IMR-90 (cell line): ENCODE measurements at regions of chr13 and their contacts with region 1.

Region 1: DNA sequence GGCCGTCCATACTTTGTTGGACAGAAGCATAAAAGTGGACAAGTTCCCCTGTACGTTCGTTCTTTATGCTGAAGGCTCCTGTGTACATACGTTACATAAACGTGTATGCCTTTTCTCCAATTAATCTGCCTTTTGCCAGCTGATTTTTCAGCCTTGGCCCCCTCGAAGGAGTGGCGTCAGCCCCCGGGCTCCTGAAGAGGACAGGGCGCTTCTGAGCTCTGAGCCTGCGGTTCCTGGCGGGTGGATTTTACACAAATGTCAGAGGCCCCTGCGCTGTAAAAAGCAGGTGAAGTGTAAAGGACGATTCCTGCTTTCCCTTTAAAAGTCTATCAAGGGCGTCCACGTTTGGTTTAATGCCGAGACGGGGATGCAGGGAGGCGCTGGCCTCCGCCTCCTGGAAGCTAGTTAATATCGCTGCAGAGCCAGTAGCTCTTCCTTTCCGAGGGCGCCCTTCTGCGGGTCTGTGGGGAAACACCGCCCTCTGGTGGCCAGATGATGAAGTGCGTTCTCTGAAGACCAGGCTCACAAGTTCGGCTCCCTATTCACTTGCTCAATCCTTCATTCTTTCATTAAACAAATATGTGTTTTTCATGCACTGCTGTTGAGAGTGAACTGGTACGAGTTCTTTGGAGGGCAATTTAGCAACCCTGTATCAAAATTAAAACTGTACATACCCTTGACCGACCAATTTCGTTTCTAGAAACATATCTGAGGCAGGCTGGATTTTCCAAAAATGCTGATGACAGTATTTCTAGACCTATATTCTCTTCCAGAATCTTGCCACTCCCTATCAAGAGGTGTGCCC is 62.0 kb downstream of the GPR12 start:
- DNase-seq: peak; percentile 81
- ATAC-seq: peak; percentile 97
- H3K4me3 ChIP-seq: no peak overlapping the region
- H3K27ac ChIP-seq: no peak overlapping the region
- H3K4me1 ChIP-seq: no peaks in the 10 kb centered on the region
- H3K27me3 ChIP-seq: no peaks in the 10 kb centered on the region
- CTCF ChIP-seq: peak; percentile 98
- POLR2A ChIP-seq: peak; percentile 61
- RAD21 ChIP-seq: peak; percentile 100

Region 2: DNA sequence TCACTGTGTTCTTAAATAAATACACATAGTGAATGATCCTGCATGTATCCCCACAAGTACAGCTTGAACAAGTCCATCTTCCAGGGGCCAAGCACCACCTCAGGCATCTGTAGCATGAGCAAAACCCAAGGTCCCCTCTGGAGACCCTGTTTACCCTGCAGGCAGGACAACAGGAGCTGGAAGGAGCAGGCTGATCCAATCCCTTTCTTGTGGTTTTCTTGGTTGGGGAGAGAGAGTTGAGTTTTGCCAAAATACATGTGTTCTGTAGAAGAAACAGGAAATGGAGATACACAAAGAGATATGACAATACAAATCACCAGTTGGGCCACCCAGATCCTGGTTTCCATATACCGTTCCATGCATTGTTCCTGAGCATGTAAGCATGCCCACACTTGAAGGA is 739.6 kb before region 1 on chr13:
- CTCF ChIA-PET with region 1: no interaction called
- POLR2A ChIA-PET with region 1: no interaction called
- dilution Hi-C with region 1: no loop called
- in situ Hi-C with region 1: no loop called
- intact Hi-C with region 1: no loop called
- DNase-seq: no peak
- ATAC-seq: no peak
- H3K4me3 ChIP-seq: no peak overlapping the region
- H3K27ac ChIP-seq: no peak overlapping the region
- H3K4me1 ChIP-seq: no peaks in the 10 kb centered on the region
- H3K27me3 ChIP-seq: no peaks in the 10 kb centered on the region
- CTCF ChIP-seq: no peak
- POLR2A ChIP-seq: no peak
- RAD21 ChIP-seq: no peak

Region 3: DNA sequence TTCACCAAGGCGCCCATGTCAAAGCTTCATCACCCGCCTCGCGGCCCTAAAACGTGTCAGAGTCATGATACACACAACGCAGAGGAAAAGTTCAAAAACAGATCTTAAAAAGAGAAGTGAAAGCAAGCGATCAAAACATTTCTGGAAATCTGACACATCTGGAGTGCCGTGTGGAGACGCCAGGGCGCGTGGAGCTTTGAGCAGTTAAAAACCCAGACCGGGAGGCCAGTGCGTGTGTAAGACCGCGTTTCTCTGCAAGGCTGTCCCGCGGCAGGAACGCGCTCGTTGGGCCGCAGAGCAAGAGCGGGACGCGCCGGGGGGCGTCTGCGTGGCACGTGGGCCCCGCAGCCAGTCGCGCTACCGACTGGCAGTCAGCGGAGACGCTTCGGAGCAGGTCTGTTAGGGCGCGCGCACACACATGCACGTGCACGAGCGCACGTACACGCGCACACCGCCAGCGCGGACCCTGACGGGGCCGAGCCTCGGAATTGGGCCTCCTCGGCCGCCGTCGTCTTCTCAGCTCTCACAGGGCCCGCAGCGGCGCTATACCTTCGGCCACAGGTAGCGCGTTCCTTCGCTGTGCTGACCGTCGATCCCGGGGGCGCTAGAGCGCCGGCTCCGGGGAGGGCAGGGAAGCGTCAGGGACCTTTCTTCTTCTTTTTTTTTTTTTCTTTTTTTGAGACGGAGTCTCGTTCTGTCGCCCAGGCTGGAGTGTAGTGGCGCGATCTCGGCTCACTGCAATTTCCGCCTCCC is 512.3 kb before region 1 on chr13:
- CTCF ChIA-PET with region 1: interaction called, 27 read pairs
- POLR2A ChIA-PET with region 1: no interaction called
- dilution Hi-C with region 1: no loop called
- in situ Hi-C with region 1: loop called (anchors 5 kb)
- intact Hi-C with region 1: loop called (anchors 1 kb)
- DNase-seq: peak; percentile 89
- ATAC-seq: peak; percentile 87
- H3K4me3 ChIP-seq: peak overlapping the region; percentile 63
- H3K27ac ChIP-seq: peak overlapping the region; percentile 71
- H3K4me1 ChIP-seq: peaks cover 3% of the 10 kb centered on the region; the same call in 1 of the 2 replicates
- H3K27me3 ChIP-seq: no peaks in the 10 kb centered on the region
- CTCF ChIP-seq: peak; percentile 42
- POLR2A ChIP-seq: no peak
- RAD21 ChIP-seq: peak; percentile 29

Region 4: GRCh38 chr13:26253787-26254582 is 444.6 kb before region 1 on chr13 and contains the start of gene CDK8:
- CTCF ChIA-PET with region 1: no interaction called
- POLR2A ChIA-PET with region 1: no interaction called
- dilution Hi-C with region 1: no loop called
- in situ Hi-C with region 1: no loop called
- intact Hi-C with region 1: loop called (anchors 1 kb)
- DNase-seq: peak; percentile 87
- ATAC-seq: peak; percentile 95
- H3K4me3 ChIP-seq: peak within 1 kb of the TSS; percentile 82
- H3K27ac ChIP-seq: peak within 1 kb of the TSS; percentile 98
- H3K4me1 ChIP-seq: no peaks in the 10 kb centered on the region
- H3K27me3 ChIP-seq: no peaks in the 10 kb centered on the region
- CTCF ChIP-seq: no peak
- POLR2A ChIP-seq: 0 out of 2 replicates have a peak, but pooled peaks have one; percentile 37
- RAD21 ChIP-seq: no peak
- total RNA-seq, gene CDK8: 19.0 and 21.9 TPM in 2 replicates

Region 5: DNA sequence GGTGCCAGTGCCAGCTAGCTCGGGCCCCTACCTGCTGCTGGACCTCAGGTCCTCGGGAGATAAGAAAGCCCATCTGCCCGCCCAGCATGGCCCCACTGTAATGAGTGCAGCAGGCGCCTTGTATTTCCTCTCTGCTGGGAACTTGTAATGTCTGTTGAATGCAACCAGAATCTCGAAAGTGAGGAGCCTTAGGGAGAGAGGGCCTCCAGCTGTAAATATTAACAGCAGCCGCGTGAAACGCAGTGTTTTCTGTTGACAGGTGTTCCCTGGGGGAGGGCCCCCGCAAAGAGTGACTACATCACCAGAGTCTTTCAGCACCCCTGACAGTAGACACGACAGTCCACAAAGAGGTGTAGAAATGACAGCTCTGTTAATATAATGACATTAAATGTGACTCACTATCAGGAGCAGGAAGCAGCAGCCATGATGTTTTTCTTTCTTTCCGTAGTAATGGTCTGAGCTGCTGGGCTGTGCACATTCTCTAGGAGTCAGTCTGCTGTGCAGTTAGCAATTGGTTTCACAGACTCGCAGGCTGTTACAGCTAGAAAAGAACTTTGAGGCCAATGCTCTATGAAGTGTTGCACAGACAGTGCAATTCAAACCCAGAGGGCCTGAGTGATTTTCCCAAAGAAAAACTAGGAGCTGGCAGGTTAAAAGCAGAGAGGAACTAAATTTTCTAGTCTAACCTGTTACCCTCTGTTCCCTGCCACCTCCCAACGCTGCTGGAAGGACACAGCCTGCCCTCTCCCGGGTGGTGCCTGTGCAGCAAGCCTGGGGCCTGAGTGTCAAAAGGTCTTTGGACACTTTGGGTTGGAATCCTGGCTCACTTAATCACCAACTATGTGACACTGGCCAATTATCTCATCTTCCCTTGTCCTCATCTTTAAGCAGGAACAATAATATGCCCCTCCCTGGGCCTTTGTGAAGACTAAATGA is 199.7 kb before region 1 on chr13:
- CTCF ChIA-PET with region 1: interaction called, 7 read pairs
- POLR2A ChIA-PET with region 1: interaction called, 5 read pairs
- dilution Hi-C with region 1: no loop called
- in situ Hi-C with region 1: no loop called
- intact Hi-C with region 1: loop called (anchors 1 kb)
- DNase-seq: peak; percentile 43
- ATAC-seq: peak; percentile 19; the same call in 1 of the 2 replicates
- H3K4me3 ChIP-seq: no peak overlapping the region
- H3K27ac ChIP-seq: peak overlapping the region; percentile 51
- H3K4me1 ChIP-seq: peaks cover 22% of the 10 kb centered on the region
- H3K27me3 ChIP-seq: no peaks in the 10 kb centered on the region; the same call in 1 of the 2 replicates
- CTCF ChIP-seq: no peak
- POLR2A ChIP-seq: no peak
- RAD21 ChIP-seq: no peak

Region 6: GRCh38 chr13:26656919-26657318 is 41.7 kb before region 1 on chr13:
- CTCF ChIA-PET with region 1: interaction called, 8 read pairs
- POLR2A ChIA-PET with region 1: no interaction called
- dilution Hi-C with region 1: no loop called
- in situ Hi-C with region 1: no loop called
- intact Hi-C with region 1: loop called (anchors 2 kb)
- DNase-seq: peak; percentile 82
- ATAC-seq: peak; percentile 84
- H3K4me3 ChIP-seq: no peak overlapping the region
- H3K27ac ChIP-seq: no peak overlapping the region
- H3K4me1 ChIP-seq: peaks cover 6% of the 10 kb centered on the region
- H3K27me3 ChIP-seq: no peaks in the 10 kb centered on the region
- CTCF ChIP-seq: peak; percentile 42
- POLR2A ChIP-seq: no peak
- RAD21 ChIP-seq: 0 out of 2 replicates have a peak, but pooled peaks have one; percentile 15